Right ventricle myocardium superior (tissue), 1 donor: ENCODE measurements at regions of chr18 and their contacts with region 1.

Region 1: GRCh38 chr18:37445368-37445767 is 120.2 kb downstream of the CELF4 start:
- DNase-seq: no peak
- ATAC-seq: no peak

Region 2: DNA sequence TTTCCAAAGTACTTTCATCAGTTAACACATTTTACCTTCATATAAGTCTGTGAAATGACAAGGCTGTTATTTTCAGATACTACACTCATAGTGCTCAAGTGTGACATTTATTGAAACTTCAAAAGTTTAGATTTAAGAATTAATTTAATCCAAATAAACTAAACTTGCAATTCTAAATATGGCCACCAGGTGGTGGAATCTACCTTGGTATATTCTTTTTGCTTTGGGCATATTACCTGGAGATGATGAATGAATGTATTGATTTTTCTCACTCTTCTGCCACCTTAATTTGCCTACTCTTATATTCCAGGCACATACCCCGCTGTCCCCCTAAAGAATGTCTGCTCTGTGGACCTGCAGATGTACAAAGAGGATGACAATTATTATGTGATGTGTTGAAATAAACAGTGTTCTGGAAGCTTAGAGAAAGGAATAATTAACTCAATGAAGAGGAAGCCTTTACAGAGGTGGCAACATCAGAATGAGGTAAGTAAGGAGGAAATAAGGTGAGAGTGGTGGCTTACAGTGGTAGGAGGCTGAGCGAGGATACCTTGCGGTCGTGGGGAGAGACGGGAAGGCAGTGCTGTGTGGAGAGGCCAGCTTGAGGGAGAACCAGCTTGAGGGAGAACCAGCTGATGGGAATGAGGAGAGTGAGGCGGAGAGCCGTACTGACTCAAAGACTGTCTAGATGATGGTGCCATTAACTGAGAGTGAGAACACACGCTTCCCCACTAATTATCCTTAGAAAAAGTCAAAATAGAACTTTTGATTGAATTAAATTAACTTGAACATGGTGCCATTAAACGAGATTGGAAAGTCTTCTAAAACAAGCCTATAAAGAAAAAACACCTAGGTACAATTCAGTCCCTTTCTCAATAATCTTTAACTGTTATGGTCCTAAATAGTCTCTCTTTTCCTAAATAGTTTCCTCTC is 59.3 kb before region 1 on chr18:
- intact Hi-C with region 1: loop called (anchors 10 kb)
- DNase-seq: no peak
- ATAC-seq: no peak

Region 3: GRCh38 chr18:37409877-37410276 is 35.5 kb before region 1 on chr18:
- intact Hi-C with region 1: no loop called
- DNase-seq: peak; percentile 56
- ATAC-seq: peak; percentile 93